SK-N-SH (cell line): ENCODE measurements at regions of chr10 and their contacts with region 1.

Region 1: DNA sequence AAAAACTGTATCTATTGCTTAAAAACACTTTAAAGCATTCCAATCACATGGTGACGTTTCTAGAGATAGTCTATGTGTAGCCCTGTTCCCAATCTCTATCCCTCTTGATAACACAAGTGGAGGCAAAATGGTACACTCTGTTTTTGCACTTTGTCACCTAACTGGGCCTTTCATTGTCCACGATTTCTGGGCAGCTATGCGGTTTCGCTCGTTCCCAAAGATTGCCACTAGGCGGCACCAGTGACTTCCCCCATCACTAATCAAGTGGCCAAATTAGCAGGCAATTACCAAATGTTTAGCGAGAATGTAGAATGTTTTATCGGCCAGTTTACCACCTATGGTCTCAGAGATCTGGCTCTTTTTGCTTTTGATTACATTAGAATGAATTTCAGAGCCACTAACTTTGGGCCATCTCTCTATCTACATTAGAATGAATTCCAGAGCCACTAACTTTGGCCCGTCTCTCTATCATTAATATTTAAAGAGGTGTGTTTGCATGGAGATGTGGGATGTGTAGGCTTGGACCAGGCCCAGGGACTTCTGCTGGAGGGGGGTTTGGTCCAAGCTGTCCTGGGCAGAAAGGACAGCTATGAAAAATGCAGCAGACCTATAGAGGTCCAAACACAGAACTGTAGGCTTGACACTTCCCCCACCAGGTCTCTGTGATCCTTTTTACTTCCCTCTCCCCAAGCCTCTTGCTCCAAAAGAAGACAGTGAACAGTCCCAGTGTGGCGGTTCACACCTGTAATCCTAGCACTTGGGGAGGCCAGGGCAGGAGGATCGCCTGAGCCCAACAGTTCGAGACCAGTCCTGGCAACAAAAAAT is 90.1 kb downstream of the EPC1 start:
- DNase-seq: peak; percentile 59
- H3K4me3 ChIP-seq: no peak overlapping the region
- H3K27ac ChIP-seq: no peak overlapping the region
- H3K4me1 ChIP-seq: peaks cover 0 to 8% of the 10 kb centered on the region in 2 experiments; a peak in 1 of 4 replicates
- H3K27me3 ChIP-seq: no peaks in the 10 kb centered on the region
- CTCF ChIP-seq: peak; percentile 86
- EP300 ChIP-seq: no peak
- RAD21 ChIP-seq: peak; percentile 79

Region 2: GRCh38 chr10:31896947-31897384 is 359.9 kb before region 1 on chr10:
- CTCF ChIA-PET with region 1: no interaction called
- POLR2A ChIA-PET with region 1: no interaction called
- DNase-seq: no peak
- H3K4me3 ChIP-seq: peak overlapping the region in 1 of 2 experiments; percentile 4; a peak in 1 of 4 replicates
- H3K27ac ChIP-seq: peak overlapping the region in 1 of 2 experiments; percentile 64; a peak in 3 of 4 replicates
- H3K4me1 ChIP-seq: no peaks in the 10 kb centered on the region; a peak in 1 of 4 replicates
- H3K27me3 ChIP-seq: no peaks in the 10 kb centered on the region
- CTCF ChIP-seq: no peak
- EP300 ChIP-seq: no peak
- RAD21 ChIP-seq: no peak

Region 3: GRCh38 chr10:32210306-32211045 is 46.3 kb before region 1 on chr10:
- CTCF ChIA-PET with region 1: interaction called, 10 read pairs
- POLR2A ChIA-PET with region 1: no interaction called
- DNase-seq: peak; percentile 58
- H3K4me3 ChIP-seq: no peak overlapping the region
- H3K27ac ChIP-seq: no peak overlapping the region
- H3K4me1 ChIP-seq: no peaks in the 10 kb centered on the region; a peak in 1 of 4 replicates
- H3K27me3 ChIP-seq: no peaks in the 10 kb centered on the region
- CTCF ChIP-seq: peak; percentile 60
- EP300 ChIP-seq: no peak
- RAD21 ChIP-seq: peak; percentile 70

Region 4: GRCh38 chr10:32244421-32245207 is 12.2 kb before region 1 on chr10:
- CTCF ChIA-PET with region 1: interaction called, 39 read pairs
- POLR2A ChIA-PET with region 1: no interaction called
- DNase-seq: no peak
- H3K4me3 ChIP-seq: no peak overlapping the region
- H3K27ac ChIP-seq: no peak overlapping the region
- H3K4me1 ChIP-seq: no peaks in the 10 kb centered on the region
- H3K27me3 ChIP-seq: no peaks in the 10 kb centered on the region
- CTCF ChIP-seq: no peak
- EP300 ChIP-seq: no peak
- RAD21 ChIP-seq: no peak

Region 5: DNA sequence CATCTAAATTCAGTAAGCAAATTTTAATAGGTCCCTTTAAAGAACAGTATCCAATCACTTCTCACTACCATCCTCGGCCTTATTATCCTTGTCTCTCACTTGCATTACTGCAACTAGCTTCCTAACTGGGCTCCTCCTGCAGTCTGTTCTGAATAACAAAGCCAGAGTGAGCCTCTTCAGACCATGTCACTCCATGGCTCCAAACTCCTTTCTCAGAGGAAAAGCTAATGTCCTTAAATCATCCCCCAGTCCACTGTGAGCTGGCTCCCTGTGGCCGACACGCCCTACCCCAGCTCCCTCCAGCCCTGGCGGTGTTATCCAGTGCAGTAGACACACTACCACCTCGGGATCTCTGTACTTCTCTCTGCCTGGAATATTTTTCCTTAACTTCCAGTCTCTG is 10.2 kb after region 1 on chr10:
- CTCF ChIA-PET with region 1: interaction called, 25 read pairs
- POLR2A ChIA-PET with region 1: no interaction called
- DNase-seq: no peak
- H3K4me3 ChIP-seq: no peak overlapping the region
- H3K27ac ChIP-seq: no peak overlapping the region
- H3K4me1 ChIP-seq: no peaks in the 10 kb centered on the region; a peak in 1 of 4 replicates
- H3K27me3 ChIP-seq: no peaks in the 10 kb centered on the region
- CTCF ChIP-seq: no peak
- EP300 ChIP-seq: no peak
- RAD21 ChIP-seq: no peak

Region 6: DNA sequence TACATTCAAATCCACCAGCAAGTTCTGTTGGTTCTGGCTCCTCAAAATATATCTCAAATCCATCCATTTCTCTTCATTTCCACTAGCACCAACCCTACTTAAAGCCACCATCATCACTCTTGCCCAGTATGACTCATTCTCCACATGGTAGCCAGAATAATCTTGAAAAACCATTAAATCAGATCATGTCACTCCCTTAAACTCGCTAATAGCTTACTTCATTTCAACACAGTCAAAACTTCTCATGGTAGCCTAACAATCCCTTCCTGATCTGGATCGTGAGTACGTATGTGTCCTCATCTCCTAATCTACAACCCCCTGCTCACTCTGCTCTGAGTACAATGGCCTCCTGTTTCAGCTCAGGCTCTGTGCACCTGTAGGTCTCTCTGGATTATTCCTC is 81.4 kb after region 1 on chr10:
- CTCF ChIA-PET with region 1: interaction called, 13 read pairs
- POLR2A ChIA-PET with region 1: no interaction called
- DNase-seq: no peak
- H3K4me3 ChIP-seq: no peak overlapping the region
- H3K27ac ChIP-seq: no peak overlapping the region
- H3K4me1 ChIP-seq: peaks cover 12 to 30% of the 10 kb centered on the region in 2 experiments; a peak in 3 of 4 replicates
- H3K27me3 ChIP-seq: no peaks in the 10 kb centered on the region
- CTCF ChIP-seq: no peak
- EP300 ChIP-seq: no peak
- RAD21 ChIP-seq: no peak

Region 7: DNA sequence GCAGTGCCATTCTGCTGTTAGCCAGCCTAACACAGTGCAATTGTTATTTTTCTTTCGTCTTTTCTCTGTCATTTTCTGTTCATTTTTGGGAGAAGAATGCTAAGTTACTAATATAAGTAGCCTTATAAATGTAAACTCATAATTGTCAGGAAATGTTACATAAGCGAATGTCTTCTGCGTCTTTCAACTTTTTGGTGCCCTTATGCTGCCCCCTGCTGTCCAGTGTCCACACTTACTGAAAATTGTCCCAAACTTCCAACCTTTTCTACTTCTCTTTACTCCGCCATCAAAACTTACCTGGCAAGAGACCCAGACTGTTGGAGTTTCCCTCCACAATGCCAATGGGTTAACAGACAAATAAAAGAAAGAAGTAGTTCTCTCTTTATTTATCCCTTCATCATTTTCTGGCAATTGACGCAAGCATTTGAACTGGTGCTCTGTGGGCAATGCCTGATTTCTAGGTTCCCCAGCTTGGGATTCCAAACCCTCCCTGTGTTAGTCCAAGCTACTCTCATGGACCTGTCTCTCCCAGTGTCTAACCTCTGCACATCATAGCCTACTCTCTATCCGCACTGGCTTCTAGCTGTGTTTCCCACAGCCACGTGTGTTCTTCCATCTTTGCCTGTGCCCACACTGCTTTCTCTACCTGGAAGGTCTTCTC is 111.1 kb after region 1 on chr10:
- CTCF ChIA-PET with region 1: interaction called, 12 read pairs
- POLR2A ChIA-PET with region 1: no interaction called
- DNase-seq: peak; percentile 46
- H3K4me3 ChIP-seq: no peak overlapping the region; a peak in 1 of 4 replicates
- H3K27ac ChIP-seq: no peak overlapping the region
- H3K4me1 ChIP-seq: no peaks in the 10 kb centered on the region; a peak in 1 of 4 replicates
- H3K27me3 ChIP-seq: no peaks in the 10 kb centered on the region
- CTCF ChIP-seq: peak; percentile 87
- EP300 ChIP-seq: no peak
- RAD21 ChIP-seq: peak; percentile 82